ENCODE measurements at regions of chr1 and their contacts with region 1.

Region 1: GRCh38 chr1:9181176-9181906 is 52.4 kb upstream of the GPR157 start:
- DNase-seq: peak; percentile 84
- CTCF ChIP-seq: peak; percentile 99

Region 2: GRCh38 chr1:9069326-9070100 is 111.8 kb before region 1 on chr1 and contains the start of gene SLC2A5:
- CTCF ChIA-PET with region 1: no interaction called
- POLR2A ChIA-PET with region 1: no interaction called
- DNase-seq: peak; percentile 83
- CTCF ChIP-seq: no peak

Region 3: GRCh38 chr1:9121496-9122409 is 59.6 kb before region 1 on chr1:
- CTCF ChIA-PET with region 1: interaction called, 12 read pairs
- POLR2A ChIA-PET with region 1: interaction called, 9 read pairs
- DNase-seq: peak; percentile 78
- CTCF ChIP-seq: no peak

Region 4: GRCh38 chr1:9166289-9167235 is 14.8 kb before region 1 on chr1:
- CTCF ChIA-PET with region 1: interaction called, 38 read pairs
- POLR2A ChIA-PET with region 1: interaction called, 5 read pairs
- DNase-seq: no peak
- CTCF ChIP-seq: no peak

Region 5: GRCh38 chr1:9196129-9197040 is 15.0 kb after region 1 on chr1:
- CTCF ChIA-PET with region 1: interaction called, 79 read pairs
- POLR2A ChIA-PET with region 1: no interaction called
- DNase-seq: peak; percentile 74
- CTCF ChIP-seq: peak; percentile 82

Region 6: GRCh38 chr1:9207086-9207485 is 25.7 kb after region 1 on chr1:
- CTCF ChIA-PET with region 1: no interaction called
- POLR2A ChIA-PET with region 1: no interaction called
- DNase-seq: peak; percentile 52
- CTCF ChIP-seq: no peak

Region 7: GRCh38 chr1:9222846-9223625 is 41.7 kb after region 1 on chr1:
- CTCF ChIA-PET with region 1: no interaction called
- POLR2A ChIA-PET with region 1: no interaction called
- DNase-seq: no peak
- CTCF ChIP-seq: no peak

Region 8: GRCh38 chr1:9234223-9235095 is 53.1 kb after region 1 on chr1 and contains the start of gene H6PD:
- CTCF ChIA-PET with region 1: interaction called, 17 read pairs
- POLR2A ChIA-PET with region 1: no interaction called
- DNase-seq: peak; percentile 99
- CTCF ChIP-seq: peak; percentile 83

Region 9: GRCh38 chr1:9249534-9250410 is 68.4 kb after region 1 on chr1:
- CTCF ChIA-PET with region 1: no interaction called
- POLR2A ChIA-PET with region 1: no interaction called
- DNase-seq: peak; percentile 56
- CTCF ChIP-seq: peak; percentile 50

Measured in GM10248 (cell line).